PC-9 (cell line): ENCODE measurements at regions of chr9 and their contacts with region 1.

Region 1: DNA sequence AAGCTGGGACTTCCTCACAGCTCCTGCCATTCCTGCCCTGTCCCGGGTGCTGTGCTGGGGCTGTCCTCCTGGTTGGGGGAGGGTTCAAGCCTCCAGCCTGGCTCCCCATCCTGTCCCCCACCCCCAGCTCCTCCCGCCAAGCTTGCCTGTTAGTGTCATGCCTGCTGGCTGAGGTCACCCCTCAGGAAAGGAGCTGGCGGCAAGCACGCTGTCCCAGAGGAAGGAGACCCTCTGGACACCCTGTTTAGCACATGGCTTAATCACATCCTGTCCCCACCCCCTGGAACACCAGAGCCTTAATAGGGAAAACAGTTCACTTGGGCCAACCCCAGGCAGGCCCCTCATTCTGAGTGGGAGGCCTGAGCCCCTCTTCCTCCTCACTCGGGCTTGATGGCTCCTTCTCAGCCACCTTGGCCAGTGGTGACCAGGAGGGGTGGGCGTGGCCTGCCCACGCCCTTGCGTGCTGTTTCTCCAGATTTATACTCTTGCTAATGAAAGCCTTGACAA is 9.2 kb upstream of the PHYHD1 start:
- DNase-seq: peak; percentile 64 to 81
- H3K4me3 ChIP-seq: peak overlapping the region; percentile 7; the same call in 1 of the 2 replicates
- H3K27ac ChIP-seq: peak overlapping the region; percentile 96
- H3K4me1 ChIP-seq: peaks cover 44% of the 10 kb centered on the region
- H3K27me3 ChIP-seq: no peaks in the 10 kb centered on the region
- CTCF ChIP-seq: no peak

Region 2: GRCh38 chr9:128552153-128552743 is 359.3 kb before region 1 on chr9 and contains the start of gene SPTAN1:
- CTCF ChIA-PET with region 1: interaction called, 5 read pairs
- POLR2A ChIA-PET with region 1: interaction called, 12 read pairs
- intact Hi-C with region 1: no loop called
- DNase-seq: peak; percentile 56 to 91
- H3K4me3 ChIP-seq: peak within 1 kb of the TSS; percentile 75
- H3K27ac ChIP-seq: peak within 1 kb of the TSS; percentile 32; the same call in 1 of the 2 replicates
- H3K4me1 ChIP-seq: peaks cover 39% of the 10 kb centered on the region
- H3K27me3 ChIP-seq: no peaks in the 10 kb centered on the region
- CTCF ChIP-seq: no peak
- total RNA-seq, gene SPTAN1: 214 and 239 TPM in 2 replicates

Region 3: GRCh38 chr9:128863647-128864046 is 47.9 kb before region 1 on chr9:
- CTCF ChIA-PET with region 1: interaction called, 6 read pairs
- POLR2A ChIA-PET with region 1: interaction called, 4 read pairs
- intact Hi-C with region 1: loop called (anchors 1 kb)
- DNase-seq: peak; percentile 70 to 85
- H3K4me3 ChIP-seq: no peak overlapping the region
- H3K27ac ChIP-seq: no peak overlapping the region
- H3K4me1 ChIP-seq: peaks cover 37% of the 10 kb centered on the region
- H3K27me3 ChIP-seq: no peaks in the 10 kb centered on the region
- CTCF ChIP-seq: peak; percentile 96

Region 4: GRCh38 chr9:128892317-128892921 is 19.2 kb before region 1 on chr9:
- CTCF ChIA-PET with region 1: interaction called, 3 read pairs
- POLR2A ChIA-PET with region 1: no interaction called
- intact Hi-C with region 1: loop called (anchors 1 kb)
- DNase-seq: peak; percentile 94 to 99
- H3K4me3 ChIP-seq: peak overlapping the region; percentile 31; the same call in 1 of the 2 replicates
- H3K27ac ChIP-seq: peak overlapping the region; percentile 79
- H3K4me1 ChIP-seq: peaks cover 26% of the 10 kb centered on the region
- H3K27me3 ChIP-seq: no peaks in the 10 kb centered on the region
- CTCF ChIP-seq: no peak

Region 5: GRCh38 chr9:129282272-129283211 is 371.0 kb after region 1 on chr9:
- CTCF ChIA-PET with region 1: no interaction called
- POLR2A ChIA-PET with region 1: no interaction called
- intact Hi-C with region 1: no loop called
- DNase-seq: no peak
- H3K4me3 ChIP-seq: no peak overlapping the region
- H3K27ac ChIP-seq: no peak overlapping the region
- H3K4me1 ChIP-seq: peaks cover 20% of the 10 kb centered on the region
- H3K27me3 ChIP-seq: no peaks in the 10 kb centered on the region
- CTCF ChIP-seq: no peak

Region 6: GRCh38 chr9:129665389-129665775 is 753.8 kb after region 1 on chr9 and contains the start of gene PRRX2:
- CTCF ChIA-PET with region 1: interaction called, 11 read pairs
- POLR2A ChIA-PET with region 1: no interaction called
- intact Hi-C with region 1: no loop called
- DNase-seq: no peak
- H3K4me3 ChIP-seq: no peak within 1 kb of the TSS
- H3K27ac ChIP-seq: no peak within 1 kb of the TSS
- H3K4me1 ChIP-seq: no peaks in the 10 kb centered on the region
- H3K27me3 ChIP-seq: peaks cover 3% of the 10 kb centered on the region; the same call in 1 of the 2 replicates
- CTCF ChIP-seq: no peak
- total RNA-seq, gene PRRX2: 0.98 and 1.6 TPM in 2 replicates